Panc1 (cell line): ENCODE measurements at regions of chr6 and their contacts with region 1.

Region 1: DNA sequence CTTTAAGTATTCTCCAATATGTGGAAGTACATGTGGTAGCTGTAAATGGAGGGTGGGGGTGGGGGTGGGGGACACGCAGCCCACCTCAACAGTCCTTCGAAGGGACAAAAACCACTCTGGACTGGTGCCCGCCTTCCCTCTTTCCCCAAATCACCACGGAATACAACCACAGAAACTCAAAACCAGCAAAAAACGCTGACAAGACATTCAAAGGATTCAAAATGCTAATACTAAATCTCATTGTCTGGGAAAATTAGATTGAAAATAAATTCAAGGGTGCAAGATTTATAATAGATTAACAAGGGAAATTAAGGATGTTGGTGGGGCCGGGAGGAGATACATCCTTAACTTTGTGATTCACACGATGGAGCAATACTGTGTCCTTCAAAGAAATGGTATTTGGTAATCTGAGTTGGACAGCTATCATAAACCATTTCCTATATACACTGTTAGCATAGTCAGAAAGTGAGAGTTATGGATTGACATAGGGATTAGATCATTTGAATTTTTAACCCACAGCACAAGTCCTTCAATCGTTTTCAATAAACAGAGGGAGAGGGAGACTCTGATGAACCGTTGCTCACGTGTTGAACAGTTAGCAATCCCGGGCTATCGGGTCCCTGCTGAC is 766 bp upstream of the TBC1D22B start:
- DNase-seq: no peak
- ATAC-seq: no peak
- H3K4me3 ChIP-seq: peak overlapping the region; percentile 91 to 94
- H3K27ac ChIP-seq: peak overlapping the region; percentile 75
- H3K4me1 ChIP-seq: 0 out of 2 replicates have a peak, but pooled peaks cover 3% of the 10 kb centered on the region
- H3K27me3 ChIP-seq: no peaks in the 10 kb centered on the region
- CTCF ChIP-seq: no peak

Region 2: DNA sequence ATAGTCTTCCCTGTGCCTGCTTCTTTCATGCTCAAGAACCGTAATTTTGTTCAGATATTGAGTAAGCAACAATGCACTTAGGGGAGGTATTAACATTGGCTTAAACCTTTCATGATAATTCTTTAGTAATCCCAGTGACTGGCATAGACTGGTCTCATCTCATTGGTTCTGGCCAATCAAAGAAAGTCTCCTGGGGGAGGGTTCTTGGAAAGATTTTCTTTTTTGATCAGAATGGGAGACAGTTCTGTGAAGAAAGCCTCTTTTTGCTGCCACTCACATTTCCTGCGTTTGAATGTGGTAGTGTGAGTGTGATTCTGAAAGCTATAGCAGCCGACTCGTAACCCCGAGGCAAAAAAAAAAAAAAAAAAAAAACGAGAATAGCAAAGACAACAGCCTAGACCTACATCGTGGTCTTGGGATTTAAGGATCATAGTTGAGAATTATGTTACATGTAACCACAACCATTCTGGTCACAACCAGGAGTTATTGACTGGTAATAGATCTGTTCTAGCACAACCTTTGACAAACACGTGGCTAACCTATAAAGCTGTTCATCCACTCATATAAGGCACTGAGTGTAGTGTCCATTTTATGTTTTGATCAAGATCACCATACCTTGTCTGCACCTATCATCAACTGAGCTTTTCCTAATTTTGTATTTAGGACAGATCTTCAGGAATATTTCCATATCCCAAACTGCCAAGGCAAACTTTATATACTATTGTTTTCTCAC is 16.2 kb after region 1 on chr6:
- CTCF ChIA-PET with region 1: interaction called, 7 read pairs
- POLR2A ChIA-PET with region 1: interaction called, 14 read pairs
- in situ Hi-C with region 1: no loop called
- intact Hi-C with region 1: no loop called
- DNase-seq: no peak
- ATAC-seq: no peak
- H3K4me3 ChIP-seq: no peak overlapping the region
- H3K27ac ChIP-seq: no peak overlapping the region
- H3K4me1 ChIP-seq: no peaks in the 10 kb centered on the region
- H3K27me3 ChIP-seq: no peaks in the 10 kb centered on the region
- CTCF ChIP-seq: no peak

Region 3: DNA sequence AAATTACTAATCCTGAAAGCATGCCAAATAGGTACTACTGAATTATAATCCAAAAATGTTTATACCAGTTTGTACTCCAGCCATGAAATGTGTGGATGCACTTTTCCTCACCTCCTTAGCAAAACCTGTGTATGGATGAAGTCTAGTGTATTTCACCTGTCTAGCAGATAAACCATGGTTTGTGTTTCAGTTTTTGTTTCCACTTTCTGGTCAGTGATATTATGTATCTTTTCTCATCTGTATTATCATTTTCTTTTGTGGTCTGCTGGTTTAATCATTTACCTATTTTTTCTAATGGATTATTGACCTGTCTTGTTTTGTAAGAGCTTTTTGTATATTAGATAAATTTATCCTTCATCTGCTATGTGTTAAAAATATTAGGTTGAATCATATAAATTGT is 42.2 kb after region 1 on chr6:
- CTCF ChIA-PET with region 1: no interaction called
- POLR2A ChIA-PET with region 1: no interaction called
- in situ Hi-C with region 1: no loop called
- intact Hi-C with region 1: no loop called
- DNase-seq: no peak
- ATAC-seq: no peak
- H3K4me3 ChIP-seq: no peak overlapping the region
- H3K27ac ChIP-seq: no peak overlapping the region
- H3K4me1 ChIP-seq: no peaks in the 10 kb centered on the region
- H3K27me3 ChIP-seq: no peaks in the 10 kb centered on the region
- CTCF ChIP-seq: no peak